ENCODE measurements at regions of chr2 and their contacts with region 1.

Region 1: GRCh38 chr2:135004005-135004746 is 43.1 kb downstream of the MAP3K19 start:
- DNase-seq: peak; percentile 78 to 84
- H3K4me3 ChIP-seq: no peak overlapping the region
- H3K4me3 Mint-ChIP-seq: no peak overlapping the region
- H3K27ac Mint-ChIP-seq: no peak overlapping the region
- H3K4me1 ChIP-seq: no peaks in the 10 kb centered on the region
- H3K4me1 Mint-ChIP-seq: no peaks in the 10 kb centered on the region
- H3K27me3 ChIP-seq: no peaks in the 10 kb centered on the region
- H3K27me3 Mint-ChIP-seq: peaks cover 7% of the 10 kb centered on the region
- CTCF ChIP-seq: peak; percentile 93 to 98

Region 2: DNA sequence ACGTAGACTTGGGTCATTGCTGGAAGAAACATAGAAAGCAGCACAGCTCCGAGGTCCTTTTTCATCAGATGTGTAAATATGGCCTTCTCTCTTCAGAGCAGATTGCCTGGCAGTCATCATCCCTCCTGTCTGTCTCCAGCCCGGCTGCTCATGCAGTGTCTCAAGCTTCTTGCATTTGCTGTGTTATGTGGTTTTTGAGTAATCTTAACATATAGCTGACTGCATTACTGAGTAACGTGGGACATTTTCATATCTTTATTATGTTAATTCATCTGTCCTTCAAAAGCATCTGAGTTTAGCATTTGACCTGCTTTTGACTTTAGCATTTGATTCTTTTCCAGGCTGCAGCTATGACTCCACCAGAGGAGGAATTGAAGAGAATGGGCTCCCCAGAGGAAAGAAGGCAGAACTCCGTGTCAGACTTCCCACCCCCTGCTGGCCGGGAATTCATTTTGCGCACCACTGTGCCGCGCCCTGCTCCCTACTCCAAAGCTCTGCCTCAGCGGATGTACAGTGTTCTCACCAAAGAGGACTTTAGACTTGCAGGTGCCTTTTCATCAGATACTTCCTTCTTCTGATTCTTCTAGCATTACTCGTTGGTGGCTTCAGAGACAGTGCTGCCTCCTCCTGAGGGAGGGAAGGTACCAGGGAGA is 164.2 kb after region 1 on chr2:
- CTCF ChIA-PET with region 1: no interaction called
- POLR2A ChIA-PET with region 1: no interaction called
- intact Hi-C with region 1: loop called (anchors 5 kb)
- DNase-seq: peak in 1 of 2 experiments; percentile 26
- H3K4me3 ChIP-seq: no peak overlapping the region
- H3K4me3 Mint-ChIP-seq: no peak overlapping the region
- H3K27ac Mint-ChIP-seq: no peak overlapping the region
- H3K4me1 ChIP-seq: no peaks in the 10 kb centered on the region
- H3K4me1 Mint-ChIP-seq: no peaks in the 10 kb centered on the region
- H3K27me3 ChIP-seq: no peaks in the 10 kb centered on the region
- H3K27me3 Mint-ChIP-seq: no peaks in the 10 kb centered on the region
- CTCF ChIP-seq: peak in 1 of 2 experiments; percentile 17

Region 3: DNA sequence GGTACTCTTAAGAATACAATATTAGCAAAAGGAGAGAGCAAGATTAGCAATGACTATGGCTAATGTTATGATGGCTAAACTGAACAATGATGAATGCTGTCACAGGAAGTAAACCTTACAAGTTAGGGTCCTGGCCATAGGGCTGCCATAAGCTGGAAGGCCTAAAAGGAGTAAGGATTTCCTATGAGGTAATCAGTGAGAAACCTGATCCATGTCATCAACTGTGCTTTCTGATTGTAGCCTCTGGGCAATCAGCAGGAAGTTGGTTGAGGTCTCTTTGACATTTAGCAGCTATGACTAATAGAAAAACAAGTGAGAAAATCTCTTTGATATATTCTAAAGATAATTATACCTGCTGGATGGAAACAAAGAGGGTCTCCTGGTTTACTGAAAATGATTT is 240.9 kb after region 1 on chr2:
- CTCF ChIA-PET with region 1: no interaction called
- POLR2A ChIA-PET with region 1: no interaction called
- intact Hi-C with region 1: no loop called
- DNase-seq: no peak
- H3K4me3 ChIP-seq: no peak overlapping the region
- H3K4me3 Mint-ChIP-seq: no peak overlapping the region
- H3K27ac Mint-ChIP-seq: no peak overlapping the region
- H3K4me1 ChIP-seq: no peaks in the 10 kb centered on the region
- H3K4me1 Mint-ChIP-seq: no peaks in the 10 kb centered on the region
- H3K27me3 ChIP-seq: no peaks in the 10 kb centered on the region
- H3K27me3 Mint-ChIP-seq: no peaks in the 10 kb centered on the region
- CTCF ChIP-seq: no peak

Region 4: GRCh38 chr2:135473567-135473966 is 469.4 kb after region 1 on chr2:
- CTCF ChIA-PET with region 1: interaction called, 3 read pairs
- POLR2A ChIA-PET with region 1: no interaction called
- intact Hi-C with region 1: loop called (anchors 5 kb)
- DNase-seq: peak in 1 of 2 experiments; percentile 30
- H3K4me3 ChIP-seq: no peak overlapping the region
- H3K4me3 Mint-ChIP-seq: no peak overlapping the region
- H3K27ac Mint-ChIP-seq: no peak overlapping the region
- H3K4me1 ChIP-seq: no peaks in the 10 kb centered on the region
- H3K4me1 Mint-ChIP-seq: no peaks in the 10 kb centered on the region
- H3K27me3 ChIP-seq: no peaks in the 10 kb centered on the region
- H3K27me3 Mint-ChIP-seq: no peaks in the 10 kb centered on the region
- CTCF ChIP-seq: peak; percentile 50 to 73

Region 5: GRCh38 chr2:135600915-135601314 is 596.7 kb after region 1 on chr2:
- CTCF ChIA-PET with region 1: interaction called, 7 read pairs
- POLR2A ChIA-PET with region 1: no interaction called
- intact Hi-C with region 1: loop called (anchors 5 kb)
- DNase-seq: no peak
- H3K4me3 ChIP-seq: no peak overlapping the region
- H3K4me3 Mint-ChIP-seq: no peak overlapping the region
- H3K27ac Mint-ChIP-seq: no peak overlapping the region
- H3K4me1 ChIP-seq: no peaks in the 10 kb centered on the region
- H3K4me1 Mint-ChIP-seq: no peaks in the 10 kb centered on the region
- H3K27me3 ChIP-seq: no peaks in the 10 kb centered on the region
- H3K27me3 Mint-ChIP-seq: no peaks in the 10 kb centered on the region
- CTCF ChIP-seq: no peak

Region 6: DNA sequence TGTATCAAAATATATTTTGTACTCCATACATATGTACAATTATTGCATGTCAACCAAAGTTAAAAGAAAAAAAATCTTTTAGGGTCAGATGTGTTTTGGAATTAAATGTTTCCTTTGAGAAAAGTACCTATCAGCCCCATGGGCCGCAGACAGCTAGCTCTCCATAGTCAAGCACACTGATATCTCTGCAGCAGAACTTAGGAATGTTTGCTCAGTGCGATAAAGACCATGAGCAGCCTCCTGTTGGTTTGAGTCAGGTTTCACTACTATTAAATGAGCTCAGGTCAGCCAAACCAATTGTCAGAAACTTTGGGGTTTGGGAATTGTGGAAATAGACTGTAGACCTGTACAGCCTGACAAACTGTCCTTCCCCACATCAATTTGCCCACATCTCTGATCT is 799.1 kb after region 1 on chr2:
- CTCF ChIA-PET with region 1: no interaction called
- POLR2A ChIA-PET with region 1: no interaction called
- intact Hi-C with region 1: loop called (anchors 2 kb)
- DNase-seq: peak; percentile 54 to 58
- H3K4me3 ChIP-seq: no peak overlapping the region
- H3K4me3 Mint-ChIP-seq: no peak overlapping the region
- H3K27ac Mint-ChIP-seq: no peak overlapping the region
- H3K4me1 ChIP-seq: peaks cover 9% of the 10 kb centered on the region
- H3K4me1 Mint-ChIP-seq: no peaks in the 10 kb centered on the region
- H3K27me3 ChIP-seq: no peaks in the 10 kb centered on the region
- H3K27me3 Mint-ChIP-seq: no peaks in the 10 kb centered on the region
- CTCF ChIP-seq: no peak

Region 7: GRCh38 chr2:136225950-136226835 is 1222.0 kb after region 1 on chr2:
- CTCF ChIA-PET with region 1: no interaction called
- POLR2A ChIA-PET with region 1: no interaction called
- intact Hi-C with region 1: no loop called
- DNase-seq: no peak
- H3K4me3 ChIP-seq: no peak overlapping the region
- H3K4me3 Mint-ChIP-seq: no peak overlapping the region
- H3K27ac Mint-ChIP-seq: no peak overlapping the region
- H3K4me1 ChIP-seq: no peaks in the 10 kb centered on the region
- H3K4me1 Mint-ChIP-seq: peaks cover 11% of the 10 kb centered on the region
- H3K27me3 ChIP-seq: no peaks in the 10 kb centered on the region
- H3K27me3 Mint-ChIP-seq: peaks cover 14% of the 10 kb centered on the region
- CTCF ChIP-seq: no peak